ENCODE measurements at regions of chr20 and their contacts with region 1.

Region 1: GRCh38 chr20:49915378-49916145 is at the start of gene SPATA2:
- DNase-seq: peak; percentile 98
- ATAC-seq: peak; percentile 82
- H3K4me3 ChIP-seq: peak within 1 kb of the TSS; percentile 74 to 91 (median 90)
- H3K27ac ChIP-seq: peak within 1 kb of the TSS; percentile 97
- H3K4me1 ChIP-seq: peaks cover 70% of the 10 kb centered on the region
- H3K27me3 ChIP-seq: no peaks in the 10 kb centered on the region; a peak in 1 of 5 replicates
- CTCF ChIP-seq: peak; percentile 33
- EP300 ChIP-seq: 0 out of 4 replicates have a peak, but pooled peaks of 1 of the 2 experiments have one; percentile 8
- POLR2A ChIP-seq: peak; percentile 72 to 83
- RAD21 ChIP-seq: peak; percentile 51
- total RNA-seq, gene SPATA2: 3.2 and 4.3 TPM in 2 replicates

Region 2: GRCh38 chr20:49583669-49584417 is 331.7 kb before region 1 on chr20:
- CTCF ChIA-PET with region 1: no interaction called
- POLR2A ChIA-PET with region 1: interaction called, 10 read pairs
- in situ Hi-C with region 1: no loop called
- intact Hi-C with region 1: no loop called
- DNase-seq: peak; percentile 97
- ATAC-seq: peak; percentile 95
- H3K4me3 ChIP-seq: peak overlapping the region in 2 of 3 experiments; percentile 29 to 59; a peak in 4 of 6 replicates
- H3K27ac ChIP-seq: peak overlapping the region; percentile 84
- H3K4me1 ChIP-seq: peaks cover 56% of the 10 kb centered on the region
- H3K27me3 ChIP-seq: peaks cover 0 to 4% of the 10 kb centered on the region in 2 experiments; a peak in 1 of 5 replicates
- CTCF ChIP-seq: peak; percentile 90
- EP300 ChIP-seq: peak; percentile 82 to 91
- POLR2A ChIP-seq: peak; percentile 80 to 94
- RAD21 ChIP-seq: peak; percentile 80

Region 3: GRCh38 chr20:49790077-49790798 is 125.3 kb before region 1 on chr20:
- CTCF ChIA-PET with region 1: no interaction called
- POLR2A ChIA-PET with region 1: no interaction called
- in situ Hi-C with region 1: no loop called
- intact Hi-C with region 1: no loop called
- DNase-seq: peak; percentile 49
- ATAC-seq: peak; percentile 60
- H3K4me3 ChIP-seq: peak overlapping the region in 2 of 3 experiments; percentile 1 to 13; a peak in 2 of 6 replicates
- H3K27ac ChIP-seq: no peak overlapping the region
- H3K4me1 ChIP-seq: peaks cover 65% of the 10 kb centered on the region
- H3K27me3 ChIP-seq: no peaks in the 10 kb centered on the region; a peak in 1 of 5 replicates
- CTCF ChIP-seq: no peak
- EP300 ChIP-seq: no peak
- POLR2A ChIP-seq: no peak
- RAD21 ChIP-seq: no peak

Region 4: GRCh38 chr20:49901588-49901987 is 14.0 kb before region 1 on chr20:
- CTCF ChIA-PET with region 1: no interaction called
- POLR2A ChIA-PET with region 1: interaction called, 37 read pairs
- in situ Hi-C with region 1: no loop called
- intact Hi-C with region 1: no loop called
- DNase-seq: no peak
- ATAC-seq: peak; percentile 6; the same call in 2 of the 3 replicates
- H3K4me3 ChIP-seq: no peak overlapping the region
- H3K27ac ChIP-seq: no peak overlapping the region
- H3K4me1 ChIP-seq: peaks cover 50% of the 10 kb centered on the region
- H3K27me3 ChIP-seq: no peaks in the 10 kb centered on the region
- CTCF ChIP-seq: no peak
- EP300 ChIP-seq: no peak
- POLR2A ChIP-seq: no peak
- RAD21 ChIP-seq: no peak

Region 5: GRCh38 chr20:49928401-49929141 is 13.0 kb after region 1 on chr20:
- CTCF ChIA-PET with region 1: interaction called, 11 read pairs
- POLR2A ChIA-PET with region 1: interaction called, 105 read pairs
- in situ Hi-C with region 1: no loop called
- intact Hi-C with region 1: loop called (anchors 2 kb)
- DNase-seq: peak; percentile 86
- ATAC-seq: peak; percentile 89
- H3K4me3 ChIP-seq: peak overlapping the region in 1 of 3 experiments; percentile 36; a peak in 2 of 6 replicates
- H3K27ac ChIP-seq: no peak overlapping the region
- H3K4me1 ChIP-seq: peaks cover 44% of the 10 kb centered on the region
- H3K27me3 ChIP-seq: no peaks in the 10 kb centered on the region
- CTCF ChIP-seq: peak; percentile 92
- EP300 ChIP-seq: peak in 1 of 2 experiments; percentile 56; a peak in 1 of 4 replicates
- POLR2A ChIP-seq: no peak
- RAD21 ChIP-seq: peak; percentile 94

Region 6: GRCh38 chr20:49936153-49937027 is 20.8 kb after region 1 on chr20 and contains the start of gene RNF114:
- CTCF ChIA-PET with region 1: no interaction called
- POLR2A ChIA-PET with region 1: interaction called, 105 read pairs
- in situ Hi-C with region 1: no loop called
- intact Hi-C with region 1: no loop called
- DNase-seq: peak; percentile 87
- ATAC-seq: peak; percentile 77
- H3K4me3 ChIP-seq: peak within 1 kb of the TSS; percentile 80 to 99 (median 99)
- H3K27ac ChIP-seq: peak within 1 kb of the TSS; percentile 78
- H3K4me1 ChIP-seq: peaks cover 75% of the 10 kb centered on the region
- H3K27me3 ChIP-seq: no peaks in the 10 kb centered on the region; a peak in 2 of 5 replicates
- CTCF ChIP-seq: peak; percentile 46
- EP300 ChIP-seq: peak in 1 of 2 experiments; percentile 18; a peak in 2 of 4 replicates
- POLR2A ChIP-seq: peak; percentile 87 to 99
- RAD21 ChIP-seq: peak; percentile 31; the same call in 1 of the 2 replicates
- total RNA-seq, gene RNF114: 119 and 137 TPM in 2 replicates

Region 7: DNA sequence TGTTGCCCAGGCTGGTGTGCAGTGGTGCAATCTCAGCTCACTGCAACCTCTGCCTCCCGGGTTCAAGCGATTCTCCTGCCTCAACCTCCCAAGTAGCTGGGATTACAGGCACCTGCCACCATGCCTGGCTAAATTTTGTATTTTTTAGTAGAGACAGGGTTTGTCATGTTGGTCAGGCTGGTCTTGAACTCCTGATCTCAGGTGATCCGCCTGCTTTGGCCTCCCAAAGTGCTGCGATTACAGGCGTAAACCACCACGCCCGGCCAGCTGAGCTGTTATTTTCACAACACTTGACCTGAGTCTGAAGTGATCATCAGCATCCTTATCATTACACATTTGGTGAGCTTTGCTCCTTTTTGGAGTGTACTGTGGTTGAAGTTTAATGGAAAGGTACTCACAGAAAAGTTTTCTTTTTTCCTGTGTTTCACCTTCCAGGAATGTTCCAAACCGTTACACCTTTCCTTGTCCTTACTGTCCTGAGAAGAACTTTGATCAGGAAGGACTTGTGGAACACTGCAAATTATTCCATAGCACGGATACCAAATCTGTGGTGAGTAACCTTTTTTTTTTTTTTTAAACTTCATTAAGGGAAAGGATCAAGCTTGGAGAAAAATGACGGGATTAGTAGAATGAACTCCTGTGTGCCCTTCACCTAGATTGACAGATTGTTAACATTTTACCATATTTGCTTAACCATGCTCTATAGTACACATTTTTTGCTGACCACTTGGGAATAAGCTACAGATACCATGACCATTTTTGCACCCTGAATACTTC is 30.3 kb after region 1 on chr20:
- CTCF ChIA-PET with region 1: no interaction called
- POLR2A ChIA-PET with region 1: interaction called, 13 read pairs
- in situ Hi-C with region 1: no loop called
- intact Hi-C with region 1: no loop called
- DNase-seq: peak; percentile 64
- ATAC-seq: peak; percentile 75
- H3K4me3 ChIP-seq: peak overlapping the region in 1 of 3 experiments; percentile 4; a peak in 1 of 6 replicates
- H3K27ac ChIP-seq: peak overlapping the region; percentile 66
- H3K4me1 ChIP-seq: peaks cover 79% of the 10 kb centered on the region
- H3K27me3 ChIP-seq: no peaks in the 10 kb centered on the region
- CTCF ChIP-seq: no peak
- EP300 ChIP-seq: peak in 1 of 2 experiments; percentile 74; a peak in 2 of 4 replicates
- POLR2A ChIP-seq: no peak
- RAD21 ChIP-seq: no peak

Measured in HepG2 (cell line).